H1 (cell line): ENCODE measurements at regions of chr1 and their contacts with region 1.

Region 1: DNA sequence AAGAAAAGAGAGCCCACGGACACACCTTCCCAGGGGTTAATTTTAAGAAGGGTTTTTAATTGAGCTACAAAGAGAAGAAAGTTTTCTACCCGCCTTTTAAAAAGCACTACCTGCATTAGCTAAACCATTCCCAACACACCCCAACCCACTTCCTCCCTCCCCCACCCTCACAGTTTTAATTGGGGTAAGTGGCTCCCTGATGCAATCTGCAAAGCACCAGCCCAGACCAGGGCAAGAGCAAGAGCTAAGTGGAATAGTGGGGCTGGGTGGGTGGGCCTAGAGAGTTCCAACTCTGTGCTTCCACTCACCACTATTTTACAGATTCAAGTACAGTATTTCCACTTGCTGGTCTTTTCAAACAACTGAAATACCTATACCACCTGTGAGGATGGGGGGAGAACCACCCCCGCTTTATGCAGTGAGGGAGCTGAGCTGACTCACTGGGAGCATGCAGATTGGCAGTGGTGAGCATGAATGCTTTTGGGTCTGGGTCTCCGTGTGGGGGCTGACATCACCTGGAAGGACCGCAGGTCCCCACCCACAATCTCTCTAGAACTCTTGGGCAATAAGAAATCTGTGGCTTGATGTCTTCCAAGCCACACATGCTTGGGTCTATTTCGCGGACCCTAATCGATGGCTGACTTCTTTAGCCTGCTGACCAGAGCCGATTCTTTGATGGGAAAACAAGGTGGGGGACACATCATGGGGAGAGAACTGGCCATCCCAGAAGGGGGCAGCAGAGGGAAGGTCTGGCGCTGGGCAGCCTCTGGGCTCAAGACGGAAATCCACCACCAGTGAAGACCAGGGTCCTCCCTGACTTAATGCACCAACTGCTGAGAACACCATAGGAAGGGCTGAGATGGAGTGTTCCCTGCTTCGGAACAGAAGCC is 95.5 kb downstream of the SSBP3 start:
- DNase-seq: peak in 1 of 2 experiments; percentile 86
- H3K4me3 ChIP-seq: peak overlapping the region in 3 of 4 experiments; percentile 12 to 47 (median 29); a peak in 5 of 8 replicates
- H3K27ac ChIP-seq: peak overlapping the region; percentile 75; the same call in 1 of the 2 replicates
- H3K4me1 ChIP-seq: peaks cover 34 to 51% (median 37%) of the 10 kb centered on the region in 4 experiments
- H3K27me3 ChIP-seq: no peaks in the 10 kb centered on the region
- CTCF ChIP-seq: peak; percentile 63 to 89 (median 79)
- EP300 ChIP-seq: no peak
- POLR2A ChIP-seq: 0 out of 3 replicates have a peak, but pooled peaks of 1 of the 2 experiments have one; percentile 15
- RAD21 ChIP-seq: peak; percentile 83

Region 2: DNA sequence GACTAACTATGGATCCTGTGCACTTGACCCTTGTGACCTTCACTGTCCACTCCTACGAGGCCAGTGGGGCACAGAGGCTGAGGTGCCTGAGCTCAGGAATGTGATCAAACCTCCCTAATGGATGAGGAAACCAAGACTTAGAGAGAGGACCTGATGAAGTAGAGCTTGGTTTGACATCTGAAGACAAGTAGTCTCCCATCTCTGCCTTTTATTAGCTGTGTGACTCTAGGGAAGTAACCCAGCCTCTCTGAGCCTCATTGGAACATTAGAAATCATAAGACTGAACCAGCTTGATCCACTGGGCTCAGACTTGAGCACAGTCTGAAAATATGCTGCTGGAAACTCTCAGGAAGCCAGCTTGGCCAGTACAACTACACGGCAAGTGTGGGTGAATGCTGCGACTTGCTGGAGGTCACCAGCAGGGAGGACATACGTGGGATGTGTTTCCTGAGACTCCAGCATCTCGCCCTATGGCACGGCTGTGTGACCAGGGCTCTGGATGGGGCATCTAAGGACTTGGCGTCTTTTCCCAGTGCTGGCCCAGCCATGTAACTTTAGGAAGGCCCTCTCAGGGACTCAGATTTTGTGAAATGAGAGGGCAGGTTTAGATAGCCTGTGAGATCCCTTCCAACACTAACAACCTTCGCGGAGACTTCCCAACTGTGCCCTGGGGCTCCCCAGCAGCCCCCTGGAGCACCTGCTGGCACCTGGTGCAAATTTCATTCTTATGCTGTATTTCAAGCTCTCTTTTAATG is 168.4 kb before region 1 on chr1:
- CTCF ChIA-PET with region 1: no interaction called
- POLR2A ChIA-PET with region 1: no interaction called
- DNase-seq: no peak
- H3K4me3 ChIP-seq: no peak overlapping the region
- H3K27ac ChIP-seq: no peak overlapping the region
- H3K4me1 ChIP-seq: peaks cover 0 to 7% (median 3%) of the 10 kb centered on the region in 4 experiments; a peak in 5 of 7 replicates
- H3K27me3 ChIP-seq: no peaks in the 10 kb centered on the region
- CTCF ChIP-seq: no peak
- EP300 ChIP-seq: no peak
- POLR2A ChIP-seq: no peak
- RAD21 ChIP-seq: no peak

Region 3: DNA sequence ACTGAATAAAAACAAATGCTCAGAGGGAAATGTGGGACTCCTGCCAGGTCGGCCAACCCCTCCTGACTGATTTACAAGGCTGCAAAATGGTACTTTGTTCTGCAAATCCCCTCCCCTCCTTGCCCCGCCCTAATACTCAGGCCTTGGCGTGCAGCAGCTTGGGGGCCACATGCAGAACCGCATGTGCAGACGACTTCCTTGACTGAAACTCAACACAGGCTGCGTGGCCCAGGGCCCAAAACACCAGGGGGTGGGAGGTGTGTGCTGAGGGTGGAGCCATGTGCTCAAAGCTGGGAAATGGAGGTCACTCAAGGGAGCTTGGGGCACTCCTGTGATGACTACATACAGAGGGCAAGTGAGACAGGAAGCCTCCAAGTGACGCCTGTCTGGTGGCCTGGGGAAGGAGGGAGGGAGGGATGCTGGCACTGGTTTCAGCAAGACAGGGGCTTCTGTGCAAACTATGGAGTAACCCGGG is 23.5 kb before region 1 on chr1:
- CTCF ChIA-PET with region 1: interaction called, 10 read pairs
- POLR2A ChIA-PET with region 1: interaction called, 8 read pairs
- DNase-seq: peak in 1 of 2 experiments; percentile 52
- H3K4me3 ChIP-seq: no peak overlapping the region
- H3K27ac ChIP-seq: no peak overlapping the region
- H3K4me1 ChIP-seq: peaks cover 8 to 29% (median 25%) of the 10 kb centered on the region in 4 experiments
- H3K27me3 ChIP-seq: no peaks in the 10 kb centered on the region
- CTCF ChIP-seq: no peak
- EP300 ChIP-seq: no peak
- POLR2A ChIP-seq: no peak
- RAD21 ChIP-seq: no peak

Region 4: GRCh38 chr1:54323324-54323739 is 12.6 kb after region 1 on chr1:
- CTCF ChIA-PET with region 1: interaction called, 44 read pairs
- POLR2A ChIA-PET with region 1: interaction called, 6 read pairs
- DNase-seq: no peak
- H3K4me3 ChIP-seq: no peak overlapping the region
- H3K27ac ChIP-seq: no peak overlapping the region
- H3K4me1 ChIP-seq: peaks cover 22 to 43% (median 34%) of the 10 kb centered on the region in 4 experiments
- H3K27me3 ChIP-seq: no peaks in the 10 kb centered on the region
- CTCF ChIP-seq: peak; percentile 36 to 51 (median 47)
- EP300 ChIP-seq: no peak
- POLR2A ChIP-seq: no peak
- RAD21 ChIP-seq: peak; percentile 58 to 73

Region 5: GRCh38 chr1:54342742-54343687 is 32.3 kb after region 1 on chr1:
- CTCF ChIA-PET with region 1: interaction called, 22 read pairs
- POLR2A ChIA-PET with region 1: interaction called, 8 read pairs
- DNase-seq: no peak
- H3K4me3 ChIP-seq: peak overlapping the region in 2 of 4 experiments; percentile 15 to 29; a peak in 2 of 8 replicates
- H3K27ac ChIP-seq: peak overlapping the region; percentile 33; the same call in 1 of the 2 replicates
- H3K4me1 ChIP-seq: peaks cover 21 to 29% (median 24%) of the 10 kb centered on the region in 4 experiments
- H3K27me3 ChIP-seq: no peaks in the 10 kb centered on the region
- CTCF ChIP-seq: peak; percentile 14 to 29 (median 18); a peak in 2 of 4 replicates
- EP300 ChIP-seq: no peak
- POLR2A ChIP-seq: no peak
- RAD21 ChIP-seq: no peak; a peak in 1 of 4 replicates

Region 6: DNA sequence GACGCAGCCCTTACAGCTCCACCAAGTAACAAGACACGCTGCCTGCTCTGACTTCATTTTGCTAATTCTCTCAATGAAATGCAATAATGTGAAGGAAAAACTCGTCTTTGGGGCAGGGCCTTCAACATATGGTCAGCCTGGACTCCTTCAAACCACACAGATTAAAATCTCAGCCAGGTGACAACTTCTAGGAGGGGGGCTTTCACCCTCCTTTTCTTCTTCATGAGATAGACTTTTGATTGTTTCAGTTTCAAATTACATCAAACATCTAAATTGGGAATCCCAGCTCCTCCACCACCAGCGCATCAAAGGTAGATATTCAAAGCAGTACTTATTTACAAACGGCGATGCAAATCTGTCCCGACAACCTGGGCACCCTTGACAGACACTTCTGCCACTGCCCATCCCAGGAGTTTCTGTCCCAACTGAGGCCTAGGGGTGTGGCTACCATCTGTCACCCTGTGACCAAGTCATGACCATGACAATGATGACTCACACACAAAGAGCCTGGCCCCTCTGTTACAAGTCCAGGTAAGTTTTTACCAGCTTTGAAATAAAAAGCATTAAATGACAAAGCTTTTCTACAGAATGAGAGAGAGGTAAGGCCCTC is 65.9 kb after region 1 on chr1:
- CTCF ChIA-PET with region 1: interaction called, 4 read pairs
- POLR2A ChIA-PET with region 1: interaction called, 11 read pairs
- DNase-seq: no peak
- H3K4me3 ChIP-seq: peak overlapping the region in 2 of 4 experiments; percentile 2 to 7; a peak in 2 of 8 replicates
- H3K27ac ChIP-seq: peak overlapping the region; percentile 41; the same call in 1 of the 2 replicates
- H3K4me1 ChIP-seq: peaks cover 42 to 75% (median 59%) of the 10 kb centered on the region in 4 experiments
- H3K27me3 ChIP-seq: no peaks in the 10 kb centered on the region
- CTCF ChIP-seq: no peak
- EP300 ChIP-seq: no peak
- POLR2A ChIP-seq: no peak
- RAD21 ChIP-seq: no peak

Region 7: DNA sequence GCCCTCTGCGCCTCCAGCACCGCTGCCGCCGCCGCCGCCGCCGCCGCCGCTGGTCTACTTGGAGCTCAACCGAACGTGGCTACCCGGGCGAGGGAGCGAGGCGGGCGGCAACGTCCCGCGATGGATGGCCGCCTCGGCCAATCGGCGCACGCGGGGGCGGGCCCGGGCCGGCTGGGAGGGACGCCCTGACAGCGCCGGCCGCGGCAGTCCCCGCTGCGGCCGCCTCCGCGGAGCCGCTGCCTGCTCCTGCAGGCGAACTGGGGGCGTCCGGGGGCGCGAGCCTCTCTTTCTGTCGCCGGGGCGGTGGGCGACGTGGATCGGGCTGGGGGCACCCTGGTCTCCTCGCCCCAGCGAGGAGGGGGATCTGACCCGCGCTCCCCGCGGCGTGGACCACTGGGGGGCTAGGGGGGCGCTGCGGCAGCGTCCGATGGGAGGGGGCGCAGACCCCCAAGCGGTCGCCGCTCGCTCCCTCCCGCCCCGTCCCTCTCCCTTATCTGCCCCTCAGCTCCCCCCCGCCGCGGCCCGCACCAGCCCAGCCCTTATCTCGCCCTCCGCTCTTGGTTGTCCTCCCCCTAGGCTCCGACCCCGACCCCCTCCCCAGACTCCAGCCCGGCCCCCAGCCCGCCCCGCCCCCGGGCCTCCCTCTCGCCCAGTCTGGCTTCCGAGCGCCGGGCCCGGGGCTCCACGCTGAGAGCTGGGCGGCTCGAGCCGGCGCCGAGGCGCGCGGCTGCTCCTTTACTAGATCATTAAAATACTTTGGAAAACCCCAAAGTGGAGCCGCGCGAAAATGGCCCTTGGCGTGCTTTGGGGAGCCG is 95.9 kb after region 1 on chr1 and contains the start of gene SSBP3:
- CTCF ChIA-PET with region 1: interaction called, 5 read pairs
- POLR2A ChIA-PET with region 1: interaction called, 33 read pairs
- DNase-seq: peak in 1 of 2 experiments; percentile 96
- H3K4me3 ChIP-seq: peak within 1 kb of the TSS; percentile 75 to 90 (median 83)
- H3K27ac ChIP-seq: peak within 1 kb of the TSS; percentile 90
- H3K4me1 ChIP-seq: peaks cover 14 to 35% (median 23%) of the 10 kb centered on the region in 4 experiments
- H3K27me3 ChIP-seq: no peaks in the 10 kb centered on the region
- CTCF ChIP-seq: no peak
- EP300 ChIP-seq: no peak
- POLR2A ChIP-seq: peak in 1 of 2 experiments; percentile 77; a peak in 1 of 3 replicates
- RAD21 ChIP-seq: peak in 1 of 2 experiments; percentile 3; a peak in 1 of 4 replicates
- total RNA-seq, gene SSBP3: 133 and 134 TPM in 2 replicates